ENCODE measurements at regions of chr10 and their contacts with region 1.

Region 1: DNA sequence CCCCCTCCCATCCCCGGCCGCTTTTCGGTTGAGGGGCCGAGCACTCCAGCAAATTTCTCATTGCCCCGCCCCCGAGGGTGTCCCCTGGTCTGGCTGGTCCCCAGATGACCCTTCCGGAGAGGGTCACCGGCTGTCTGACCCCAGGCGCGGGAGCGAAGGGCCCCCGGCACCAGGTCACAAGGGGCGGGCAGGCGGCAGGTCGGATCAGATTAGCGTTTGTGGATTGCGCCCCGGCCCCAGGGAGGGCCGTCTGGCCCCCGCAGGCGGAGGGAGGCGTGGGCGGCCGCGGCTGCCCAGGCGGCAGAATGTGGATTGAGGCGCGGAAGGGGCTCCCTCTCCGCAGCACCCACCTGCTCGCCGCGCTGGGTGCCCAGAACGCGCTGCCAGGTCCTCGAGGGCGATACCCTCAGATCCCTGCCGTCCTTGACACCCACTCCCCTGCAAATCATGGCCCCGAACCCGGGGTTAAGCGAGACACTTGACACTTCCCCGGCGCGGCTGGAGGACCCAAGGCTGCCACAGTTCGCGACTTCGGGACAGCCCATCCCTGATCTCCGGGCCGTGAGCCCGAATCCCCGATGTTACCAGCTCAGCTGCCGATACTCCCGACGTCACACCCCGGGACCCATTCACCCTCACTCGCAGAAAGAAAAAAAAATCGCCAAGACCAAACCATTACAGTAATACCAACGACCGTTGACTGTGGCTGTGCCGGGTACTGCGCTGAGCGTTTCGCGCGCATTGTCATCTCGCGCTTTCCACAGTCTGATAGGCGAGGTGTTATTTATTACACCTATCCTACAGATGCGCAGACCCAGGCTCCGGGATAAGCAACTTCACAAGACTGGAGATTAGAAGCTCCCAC is 953 bp downstream of the NODAL start:
- DNase-seq: no peak
- ATAC-seq: peak; percentile 39

Region 2: GRCh38 chr10:71782917-71783490 is 1342.5 kb after region 1 on chr10:
- intact Hi-C with region 1: loop called (anchors 5 kb)
- DNase-seq: peak; percentile 60
- ATAC-seq: peak; percentile 36

Measured in sciatic nerve (tissue), 2 donors.